Thyroid gland (tissue), 4 donors: ENCODE measurements at regions of chr6 and their contacts with region 1.

Region 1: DNA sequence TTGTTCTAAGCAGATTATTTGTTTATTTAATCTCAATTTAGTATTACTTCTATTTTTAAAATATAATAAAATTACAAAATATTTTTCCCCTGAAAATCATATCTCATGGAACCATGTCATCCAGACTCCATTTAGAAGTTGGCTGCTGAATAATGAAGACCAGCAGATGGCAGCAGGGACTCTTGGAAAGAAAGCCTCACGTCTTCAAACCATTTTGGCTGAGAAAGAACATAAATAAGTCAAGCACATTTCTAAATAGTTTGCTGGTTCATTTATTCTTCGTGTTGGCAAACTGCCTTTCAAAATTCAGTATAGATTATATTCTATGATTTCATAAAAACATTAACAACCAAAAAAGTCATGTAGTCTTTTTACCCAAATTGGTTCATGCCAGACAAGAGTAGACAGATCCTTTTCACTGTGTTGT is 71.7 kb downstream of the RCAN2 start:
- DNase-seq: peak; percentile 68
- H3K4me3 ChIP-seq: no peak overlapping the region
- H3K27ac ChIP-seq: no peak overlapping the region
- H3K4me1 ChIP-seq: no peaks in the 10 kb centered on the region
- H3K27me3 ChIP-seq: no peaks in the 10 kb centered on the region
- CTCF ChIP-seq: peak; percentile 43 to 92 (median 78)
- POLR2A ChIP-seq: no peak

Region 2: DNA sequence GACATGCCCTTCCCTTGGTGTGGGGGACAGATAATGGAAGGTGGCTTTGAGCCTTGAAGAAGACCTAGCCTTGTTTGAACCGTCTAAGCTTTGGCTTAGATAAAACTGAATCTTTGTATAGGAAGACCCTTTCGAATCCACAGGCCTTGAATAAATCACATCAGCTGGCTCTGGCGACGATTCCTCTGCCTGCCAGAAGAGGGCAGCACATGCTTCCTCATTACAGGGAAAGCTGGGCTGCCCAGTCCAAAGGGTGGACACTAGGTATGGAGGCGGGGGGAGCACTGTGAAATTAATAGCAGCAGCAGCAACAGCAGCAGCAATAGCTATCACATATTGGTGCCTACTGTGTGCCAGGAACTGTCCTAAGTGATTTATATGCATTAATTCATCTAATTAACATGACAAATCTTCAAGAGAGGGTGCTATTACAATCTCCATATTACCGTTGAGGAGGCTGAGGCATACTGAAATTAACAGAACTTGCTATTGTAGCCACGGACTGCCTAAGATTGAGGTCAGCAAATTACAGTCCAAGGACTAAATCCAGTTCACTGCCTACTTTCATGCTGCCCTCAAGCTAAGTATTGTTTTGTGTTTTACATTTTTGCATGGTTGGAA is 489.1 kb before region 1 on chr6:
- intact Hi-C with region 1: loop called (anchors 10 kb)
- DNase-seq: peak; percentile 74 to 79
- H3K4me3 ChIP-seq: no peak overlapping the region
- H3K27ac ChIP-seq: no peak overlapping the region
- H3K4me1 ChIP-seq: no peaks in the 10 kb centered on the region
- H3K27me3 ChIP-seq: no peaks in the 10 kb centered on the region
- CTCF ChIP-seq: peak; percentile 93 to 98 (median 96)
- POLR2A ChIP-seq: no peak

Region 3: GRCh38 chr6:46484081-46484820 is 64.7 kb after region 1 on chr6:
- intact Hi-C with region 1: loop called (anchors 10 kb)
- DNase-seq: no peak
- H3K4me3 ChIP-seq: no peak overlapping the region
- H3K27ac ChIP-seq: no peak overlapping the region
- H3K4me1 ChIP-seq: no peaks in the 10 kb centered on the region
- H3K27me3 ChIP-seq: no peaks in the 10 kb centered on the region
- CTCF ChIP-seq: no peak
- POLR2A ChIP-seq: no peak

Region 4: GRCh38 chr6:46626228-46626909 is 206.8 kb after region 1 on chr6:
- intact Hi-C with region 1: loop called (anchors 5 kb)
- DNase-seq: no peak
- H3K4me3 ChIP-seq: no peak overlapping the region
- H3K27ac ChIP-seq: no peak overlapping the region
- H3K4me1 ChIP-seq: no peaks in the 10 kb centered on the region
- H3K27me3 ChIP-seq: no peaks in the 10 kb centered on the region
- CTCF ChIP-seq: peak; percentile 40 to 85 (median 60)
- POLR2A ChIP-seq: no peak